ENCODE measurements at regions of chr18 and their contacts with region 1.

Region 1: GRCh38 chr18:12038639-12039417 is 54.8 kb upstream of the ANKRD62 start:
- DNase-seq: peak; percentile 78
- H3K4me3 Mint-ChIP-seq: peak overlapping the region; percentile 59
- H3K27ac Mint-ChIP-seq: no peak overlapping the region
- H3K4me1 Mint-ChIP-seq: peaks cover 13% of the 10 kb centered on the region
- H3K27me3 Mint-ChIP-seq: peaks cover 24% of the 10 kb centered on the region

Region 2: DNA sequence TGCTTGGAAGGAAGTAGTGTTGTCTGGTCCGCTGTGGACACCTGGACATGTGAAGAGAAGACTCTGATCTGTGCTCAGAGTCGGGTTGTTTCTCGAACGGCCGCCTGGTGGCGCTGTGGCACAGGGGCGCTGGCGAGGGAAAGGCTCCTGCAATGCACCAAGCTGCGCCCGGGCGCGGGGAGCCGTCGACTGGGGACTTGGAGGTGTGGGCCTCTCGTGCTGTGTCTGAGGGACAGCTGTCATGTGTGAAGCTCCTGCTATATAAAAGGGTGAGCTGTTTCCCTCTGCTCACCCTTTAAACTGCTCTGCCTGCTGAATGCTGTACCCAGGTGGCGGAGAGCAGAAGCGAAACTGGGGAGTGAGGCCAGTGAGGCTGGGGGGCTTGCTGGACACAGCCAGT is 305.8 kb before region 1 on chr18:
- CTCF ChIA-PET with region 1: interaction called, 27 read pairs
- POLR2A ChIA-PET with region 1: no interaction called
- intact Hi-C with region 1: loop called (anchors 1 kb)
- DNase-seq: peak; percentile 83
- H3K4me3 Mint-ChIP-seq: no peak overlapping the region
- H3K27ac Mint-ChIP-seq: no peak overlapping the region
- H3K4me1 Mint-ChIP-seq: no peaks in the 10 kb centered on the region
- H3K27me3 Mint-ChIP-seq: peaks cover 37% of the 10 kb centered on the region

Region 3: DNA sequence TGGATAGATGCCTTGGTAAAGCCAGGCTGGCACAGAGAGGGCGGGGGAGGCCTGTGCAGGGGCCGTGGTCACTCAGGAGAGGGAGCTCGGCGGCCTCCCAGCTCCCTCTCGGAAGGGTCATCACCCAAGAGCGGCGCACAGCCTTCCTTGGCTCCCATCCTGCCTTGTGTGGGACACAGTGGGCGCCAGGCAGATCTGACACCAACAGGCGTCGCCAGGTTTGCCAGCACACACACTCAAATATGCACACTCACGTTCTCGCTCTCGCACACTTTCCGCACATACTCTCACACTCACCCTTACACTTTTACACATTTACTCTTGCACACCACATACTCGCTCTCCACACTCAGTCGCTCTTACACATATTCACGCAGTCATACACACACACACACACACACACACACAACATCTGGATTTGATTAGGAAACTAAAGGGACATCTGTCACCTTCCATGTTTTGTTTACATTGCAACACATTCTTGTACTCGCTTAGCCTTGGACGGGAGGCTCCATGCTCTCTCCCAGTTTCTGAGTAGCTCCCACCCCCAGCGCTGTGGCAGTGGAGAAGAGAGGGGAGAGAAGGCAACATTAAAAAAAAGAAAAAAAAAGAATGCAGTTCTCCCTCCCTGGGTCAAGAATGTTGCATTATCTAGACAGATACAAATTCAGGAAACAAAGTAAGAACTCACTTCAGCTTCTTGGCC is 177.1 kb before region 1 on chr18:
- CTCF ChIA-PET with region 1: no interaction called
- POLR2A ChIA-PET with region 1: no interaction called
- intact Hi-C with region 1: no loop called
- DNase-seq: no peak
- H3K4me3 Mint-ChIP-seq: no peak overlapping the region
- H3K27ac Mint-ChIP-seq: no peak overlapping the region
- H3K4me1 Mint-ChIP-seq: peaks cover 3% of the 10 kb centered on the region
- H3K27me3 Mint-ChIP-seq: peaks cover 5% of the 10 kb centered on the region

Region 4: GRCh38 chr18:11932393-11932792 is 106.4 kb before region 1 on chr18:
- CTCF ChIA-PET with region 1: interaction called, 155 read pairs
- POLR2A ChIA-PET with region 1: interaction called, 3 read pairs
- intact Hi-C with region 1: no loop called
- DNase-seq: no peak
- H3K4me3 Mint-ChIP-seq: no peak overlapping the region
- H3K27ac Mint-ChIP-seq: no peak overlapping the region
- H3K4me1 Mint-ChIP-seq: no peaks in the 10 kb centered on the region
- H3K27me3 Mint-ChIP-seq: peaks cover 3% of the 10 kb centered on the region

Region 5: DNA sequence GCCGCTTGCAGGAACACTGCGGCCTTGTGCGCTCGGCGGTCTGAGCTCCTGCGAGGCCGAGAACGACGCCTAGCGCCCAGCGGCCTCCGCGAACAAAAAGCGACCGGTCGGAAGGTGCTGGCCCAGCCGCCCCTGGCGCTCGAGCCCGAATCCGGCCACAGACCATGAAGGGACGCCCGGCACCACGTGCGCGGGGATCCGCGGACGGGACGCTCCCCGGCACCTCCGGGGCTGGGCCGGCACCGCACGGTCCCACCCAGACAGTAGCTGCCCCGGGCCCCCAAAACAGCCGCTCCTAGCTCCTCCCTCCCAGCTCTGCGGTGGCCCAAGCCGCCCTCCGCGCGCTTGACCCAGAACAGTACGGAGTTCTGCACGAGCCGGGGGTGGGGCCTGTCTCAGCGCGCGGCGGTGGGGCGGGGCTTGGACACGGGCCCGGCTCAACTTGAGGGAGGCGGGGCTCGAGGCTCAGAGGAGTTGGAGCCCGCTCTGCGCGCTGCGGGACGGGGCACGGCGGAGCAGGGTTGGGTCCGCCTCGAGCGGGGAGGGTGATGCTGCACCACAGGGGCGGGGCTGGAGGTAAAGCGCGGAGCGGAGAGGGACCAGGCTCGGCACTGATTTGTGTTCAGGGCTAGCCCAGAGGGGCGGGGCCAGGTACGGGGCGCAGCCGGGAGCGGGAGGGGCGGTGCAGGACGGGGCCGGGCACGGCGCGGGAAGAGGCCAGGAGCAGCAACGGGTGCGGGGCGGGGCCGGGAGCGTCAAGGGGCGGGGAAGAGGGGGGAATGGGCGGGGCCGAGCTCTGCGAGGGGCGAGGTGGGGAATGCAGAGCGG is 58.1 kb before region 1 on chr18:
- CTCF ChIA-PET with region 1: interaction called, 5 read pairs
- POLR2A ChIA-PET with region 1: no interaction called
- intact Hi-C with region 1: loop called (anchors 2 kb)
- DNase-seq: peak; percentile 99
- H3K4me3 Mint-ChIP-seq: peak overlapping the region; percentile 76
- H3K27ac Mint-ChIP-seq: peak overlapping the region; percentile 62
- H3K4me1 Mint-ChIP-seq: peaks cover 16% of the 10 kb centered on the region
- H3K27me3 Mint-ChIP-seq: peaks cover 7% of the 10 kb centered on the region

Region 6: GRCh38 chr18:12049978-12050811 is 11.4 kb after region 1 on chr18:
- CTCF ChIA-PET with region 1: interaction called, 10 read pairs
- POLR2A ChIA-PET with region 1: no interaction called
- intact Hi-C with region 1: loop called (anchors 1 kb)
- DNase-seq: no peak
- H3K4me3 Mint-ChIP-seq: no peak overlapping the region
- H3K27ac Mint-ChIP-seq: no peak overlapping the region
- H3K4me1 Mint-ChIP-seq: peaks cover 6% of the 10 kb centered on the region
- H3K27me3 Mint-ChIP-seq: peaks cover 2% of the 10 kb centered on the region

Measured in activated CD4-positive, alpha-beta memory T cell treated with anti-CD3 and anti-CD28 coated beads for 36 hours (primary cell).